PC-9 (cell line): ENCODE measurements at regions of chr12 and their contacts with region 1.

Region 1: DNA sequence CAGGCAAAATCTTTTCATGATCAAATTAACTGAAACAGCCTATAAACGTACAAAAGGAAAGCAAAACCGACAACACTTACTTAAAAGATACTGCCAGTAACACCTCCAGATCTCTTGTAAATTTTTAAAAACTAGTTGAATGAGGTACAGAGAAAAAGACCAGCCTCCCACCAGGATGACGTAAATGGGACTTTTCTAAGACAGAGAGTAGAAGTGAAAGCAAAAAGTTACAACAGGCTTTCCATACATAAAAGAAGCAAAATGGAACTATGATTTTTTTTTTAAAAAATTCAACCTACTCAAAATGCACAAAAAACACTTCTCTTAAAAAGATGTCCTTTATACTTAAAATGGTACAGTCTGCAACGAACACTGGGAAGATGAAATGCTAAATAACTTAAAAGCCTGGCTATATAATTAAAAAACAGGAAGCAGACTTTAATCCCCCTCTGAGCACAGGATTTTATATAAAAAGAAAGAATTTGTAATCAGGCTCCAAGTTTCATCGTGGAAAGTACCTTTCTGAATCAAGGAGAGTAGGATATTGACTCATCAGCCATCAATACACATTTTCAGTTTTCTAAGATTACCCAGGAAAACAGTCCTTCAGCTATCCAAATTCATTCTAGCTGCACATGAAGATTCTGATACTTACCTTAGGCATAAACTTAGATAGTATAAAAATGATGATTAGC is 14.2 kb upstream of the MYO1A start:
- DNase-seq: no peak
- H3K4me3 ChIP-seq: no peak overlapping the region
- H3K27ac ChIP-seq: no peak overlapping the region
- H3K4me1 ChIP-seq: no peaks in the 10 kb centered on the region
- H3K27me3 ChIP-seq: no peaks in the 10 kb centered on the region
- CTCF ChIP-seq: no peak

Region 2: GRCh38 chr12:57088459-57089248 is 24.5 kb after region 1 on chr12 and contains the start of gene NAB2:
- CTCF ChIA-PET with region 1: no interaction called
- POLR2A ChIA-PET with region 1: interaction called, 19 read pairs
- intact Hi-C with region 1: no loop called
- DNase-seq: peak; percentile 82 to 95
- H3K4me3 ChIP-seq: peak within 1 kb of the TSS; percentile 94
- H3K27ac ChIP-seq: peak within 1 kb of the TSS; percentile 91
- H3K4me1 ChIP-seq: peaks cover 5% of the 10 kb centered on the region; the same call in 1 of the 2 replicates
- H3K27me3 ChIP-seq: no peaks in the 10 kb centered on the region
- CTCF ChIP-seq: no peak
- total RNA-seq, gene NAB2: 13.8 and 20.2 TPM in 2 replicates

Region 3: GRCh38 chr12:57195611-57196371 is 131.7 kb after region 1 on chr12:
- CTCF ChIA-PET with region 1: no interaction called
- POLR2A ChIA-PET with region 1: no interaction called
- intact Hi-C with region 1: no loop called
- DNase-seq: no peak
- H3K4me3 ChIP-seq: no peak overlapping the region
- H3K27ac ChIP-seq: no peak overlapping the region
- H3K4me1 ChIP-seq: no peaks in the 10 kb centered on the region
- H3K27me3 ChIP-seq: no peaks in the 10 kb centered on the region
- CTCF ChIP-seq: no peak